ENCODE measurements at regions of chr16 and their contacts with region 1.

Region 1: DNA sequence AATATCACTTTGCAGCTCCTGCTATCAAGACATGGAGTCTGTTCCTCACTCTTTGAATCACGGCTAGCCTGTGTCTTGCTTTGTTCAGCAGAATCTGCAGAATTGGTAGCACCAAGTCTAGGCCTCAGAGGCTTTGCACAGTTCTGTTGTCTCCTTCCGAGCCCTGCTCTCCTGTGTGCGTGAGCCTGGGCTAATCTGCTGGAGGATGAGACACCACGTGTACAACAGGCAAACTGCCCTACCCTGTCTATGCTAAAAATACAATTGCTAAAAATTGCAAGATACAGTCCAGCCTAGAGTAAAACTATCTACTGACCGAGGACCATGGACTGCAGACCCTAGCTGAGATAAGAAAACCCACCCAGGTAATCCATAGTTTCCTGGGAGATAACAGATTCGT is 484.7 kb downstream of the NPIPA7 start:
- DNase-seq: no peak
- H3K4me3 ChIP-seq: no peak overlapping the region
- H3K4me3 Mint-ChIP-seq: no peak overlapping the region
- H3K27ac ChIP-seq: no peak overlapping the region
- H3K27ac Mint-ChIP-seq: no peak overlapping the region
- H3K4me1 ChIP-seq: no peaks in the 10 kb centered on the region
- H3K4me1 Mint-ChIP-seq: no peaks in the 10 kb centered on the region
- H3K27me3 ChIP-seq: no peaks in the 10 kb centered on the region
- H3K27me3 Mint-ChIP-seq: peaks cover 1 to 7% (median 3%) of the 10 kb centered on the region in 3 donors
- CTCF ChIP-seq: no peak

Region 2: DNA sequence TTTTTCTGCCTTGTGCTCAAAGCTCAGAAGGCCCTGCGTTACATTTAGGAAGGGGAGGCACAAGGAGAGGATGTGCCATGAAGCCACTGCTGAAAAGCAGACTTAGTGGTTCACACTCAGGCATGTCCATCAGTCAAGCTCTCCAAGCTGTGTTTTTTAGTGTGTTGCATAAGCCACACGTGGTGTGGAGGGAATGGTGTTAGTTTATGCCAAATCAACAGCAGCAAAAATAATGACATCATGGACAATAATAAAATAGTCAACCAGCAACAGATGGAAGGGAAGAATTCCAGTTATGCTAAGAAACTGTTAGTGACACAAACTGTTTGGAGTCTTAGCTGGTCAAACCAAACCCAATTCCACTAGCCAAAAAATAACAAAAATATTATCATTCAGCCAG is 46.5 kb before region 1 on chr16:
- intact Hi-C with region 1: loop called in 1 of 2 experiments (anchors 2 kb)
- DNase-seq: no peak
- H3K4me3 ChIP-seq: no peak overlapping the region
- H3K4me3 Mint-ChIP-seq: no peak overlapping the region
- H3K27ac ChIP-seq: no peak overlapping the region
- H3K27ac Mint-ChIP-seq: no peak overlapping the region
- H3K4me1 ChIP-seq: no peaks in the 10 kb centered on the region
- H3K4me1 Mint-ChIP-seq: no peaks in the 10 kb centered on the region
- H3K27me3 ChIP-seq: no peaks in the 10 kb centered on the region
- H3K27me3 Mint-ChIP-seq: no peaks in the 10 kb centered on the region
- CTCF ChIP-seq: no peak

Measured in CD14-positive monocyte (primary cell).